Activated CD8-positive, alpha-beta T cell treated with anti-CD3 and anti-CD28 coated beads for 36 hours (primary cell): ENCODE measurements at regions of chr2 and their contacts with region 1.

Region 1: DNA sequence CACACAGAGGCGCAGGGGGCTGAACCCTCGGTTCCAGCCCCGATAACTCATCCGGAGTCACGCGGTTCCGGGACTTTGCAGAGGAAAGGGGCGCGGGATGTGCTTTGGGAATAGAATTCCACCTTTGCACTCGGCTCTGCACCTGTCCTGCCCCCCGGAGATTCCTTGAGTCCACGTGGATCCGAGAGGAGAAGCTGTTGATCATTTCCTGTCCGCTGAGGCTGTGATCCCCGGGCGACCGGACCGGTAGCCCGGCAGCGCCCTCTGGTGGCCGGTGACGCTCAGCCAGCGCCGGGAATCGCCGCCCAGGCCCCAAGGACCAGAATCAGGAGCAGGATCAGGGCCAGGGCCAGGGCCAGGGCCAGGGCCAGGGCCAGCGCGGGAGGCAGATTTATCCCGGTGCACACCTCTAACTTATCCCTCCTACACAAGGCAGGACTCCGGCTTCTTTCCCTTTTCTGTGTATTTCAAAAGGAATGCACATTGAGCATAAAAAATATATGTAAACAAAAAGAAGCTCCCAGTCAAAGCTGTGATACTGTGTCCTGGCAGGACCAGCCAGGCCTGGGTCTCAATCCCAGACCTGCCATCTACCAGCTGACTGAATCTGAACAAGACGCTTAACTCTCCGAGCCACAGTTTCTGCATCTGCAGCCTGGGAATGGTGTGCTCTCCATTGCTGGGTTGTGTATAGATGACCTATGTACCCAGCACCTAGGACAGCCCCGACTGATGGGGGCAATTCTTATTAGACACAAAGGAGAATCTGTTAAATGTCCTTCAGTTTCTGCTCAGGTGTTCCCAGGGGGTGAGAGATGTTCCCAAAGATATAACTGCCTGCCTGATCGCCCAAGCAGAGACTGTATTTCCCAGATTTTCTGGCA is 8.5 kb upstream of the SPATA3 start:
- DNase-seq: peak; percentile 81
- ATAC-seq: peak; percentile 35
- H3K4me3 Mint-ChIP-seq: peak overlapping the region; percentile 67
- H3K27ac Mint-ChIP-seq: peak overlapping the region; percentile 71
- H3K4me1 Mint-ChIP-seq: peaks cover 40% of the 10 kb centered on the region
- H3K27me3 Mint-ChIP-seq: peaks cover 18% of the 10 kb centered on the region
- CTCF ChIP-seq: peak; percentile 97

Region 2: DNA sequence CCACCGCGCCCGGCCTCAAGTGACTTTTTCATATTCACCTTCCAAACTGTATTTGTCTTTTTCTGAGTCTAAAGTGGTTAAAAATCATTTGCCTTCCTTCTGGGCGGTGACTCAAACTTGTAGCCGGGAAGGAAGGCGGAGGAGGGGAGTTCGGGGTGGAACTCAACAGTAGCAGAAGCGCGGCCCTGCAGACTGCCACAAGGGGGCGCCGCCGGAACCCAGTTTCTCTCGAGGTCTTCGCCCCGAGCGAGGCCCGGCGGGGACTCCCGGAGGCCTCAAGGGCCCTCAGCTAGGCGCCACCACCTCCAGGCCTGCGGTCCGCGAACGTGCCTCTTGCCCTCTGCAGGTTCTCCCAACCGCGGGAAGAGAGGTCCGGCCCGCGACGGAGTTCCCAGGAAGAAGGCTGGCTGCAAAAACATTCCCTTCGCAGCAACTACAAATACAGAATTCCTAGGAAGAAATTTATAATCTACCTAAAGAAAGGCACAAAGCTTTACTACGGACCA is 139.4 kb before region 1 on chr2:
- CTCF ChIA-PET with region 1: interaction called, 28 read pairs
- POLR2A ChIA-PET with region 1: no interaction called
- intact Hi-C with region 1: loop called (anchors 5 kb)
- DNase-seq: peak; percentile 97
- ATAC-seq: peak; percentile 97
- H3K4me3 Mint-ChIP-seq: no peak overlapping the region
- H3K27ac Mint-ChIP-seq: no peak overlapping the region
- H3K4me1 Mint-ChIP-seq: peaks cover 10% of the 10 kb centered on the region
- H3K27me3 Mint-ChIP-seq: peaks cover 21% of the 10 kb centered on the region
- CTCF ChIP-seq: peak; percentile 96

Region 3: GRCh38 chr2:230893841-230894781 is 93.3 kb before region 1 on chr2:
- CTCF ChIA-PET with region 1: interaction called, 437 read pairs
- POLR2A ChIA-PET with region 1: interaction called, 5 read pairs
- intact Hi-C with region 1: no loop called
- DNase-seq: no peak
- ATAC-seq: peak; percentile 63
- H3K4me3 Mint-ChIP-seq: no peak overlapping the region
- H3K27ac Mint-ChIP-seq: no peak overlapping the region
- H3K4me1 Mint-ChIP-seq: peaks cover 24% of the 10 kb centered on the region
- H3K27me3 Mint-ChIP-seq: no peaks in the 10 kb centered on the region
- CTCF ChIP-seq: no peak

Region 4: GRCh38 chr2:230947908-230948365 is 39.4 kb before region 1 on chr2:
- CTCF ChIA-PET with region 1: interaction called, 41 read pairs
- POLR2A ChIA-PET with region 1: interaction called, 19 read pairs
- intact Hi-C with region 1: loop called (anchors 2 kb)
- DNase-seq: peak; percentile 62
- ATAC-seq: peak; percentile 19
- H3K4me3 Mint-ChIP-seq: peak overlapping the region; percentile 49
- H3K27ac Mint-ChIP-seq: peak overlapping the region; percentile 60
- H3K4me1 Mint-ChIP-seq: peaks cover 48% of the 10 kb centered on the region
- H3K27me3 Mint-ChIP-seq: no peaks in the 10 kb centered on the region
- CTCF ChIP-seq: no peak

Region 5: DNA sequence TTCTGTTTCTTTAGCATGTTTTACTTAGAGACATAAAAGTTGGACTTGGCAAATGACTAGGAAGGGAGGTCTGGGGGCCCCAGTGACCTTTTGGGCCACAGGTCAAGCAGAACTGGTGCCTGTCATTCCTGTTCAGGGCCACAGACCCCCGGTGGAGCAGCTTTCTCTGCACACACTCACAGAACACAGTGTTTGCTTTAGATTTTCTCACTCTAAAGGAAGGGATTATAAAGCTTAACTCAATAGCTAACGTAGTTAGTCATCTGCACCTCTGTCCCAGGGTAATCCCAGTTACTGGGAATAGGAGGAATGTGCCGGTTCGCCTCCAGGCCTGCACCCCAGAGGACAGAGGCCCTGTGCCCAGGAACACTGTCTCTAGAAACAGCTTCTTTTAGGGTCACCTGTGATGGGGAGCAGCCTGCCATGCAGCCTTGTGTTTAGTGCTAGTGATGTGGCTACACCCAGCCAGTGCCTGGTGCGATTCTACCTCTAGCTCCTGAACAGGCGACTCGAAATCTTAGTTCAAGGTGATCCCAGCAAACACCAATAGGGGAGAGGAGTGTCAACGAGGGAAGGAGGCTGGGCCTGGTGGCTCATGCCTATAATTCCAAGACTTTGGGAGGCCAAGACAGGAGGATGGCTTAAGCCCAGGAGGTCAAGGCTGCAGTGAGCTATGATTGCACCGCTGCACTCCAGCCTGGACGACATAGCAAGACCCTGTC is 20.1 kb after region 1 on chr2:
- CTCF ChIA-PET with region 1: interaction called, 15 read pairs
- POLR2A ChIA-PET with region 1: no interaction called
- intact Hi-C with region 1: no loop called
- DNase-seq: no peak
- ATAC-seq: no peak
- H3K4me3 Mint-ChIP-seq: no peak overlapping the region
- H3K27ac Mint-ChIP-seq: no peak overlapping the region
- H3K4me1 Mint-ChIP-seq: no peaks in the 10 kb centered on the region
- H3K27me3 Mint-ChIP-seq: peaks cover 5% of the 10 kb centered on the region
- CTCF ChIP-seq: no peak

Region 6: GRCh38 chr2:231212329-231212845 is 225.0 kb after region 1 on chr2:
- CTCF ChIA-PET with region 1: no interaction called
- POLR2A ChIA-PET with region 1: no interaction called
- intact Hi-C with region 1: no loop called
- DNase-seq: no peak
- ATAC-seq: no peak
- H3K4me3 Mint-ChIP-seq: no peak overlapping the region
- H3K27ac Mint-ChIP-seq: no peak overlapping the region
- H3K4me1 Mint-ChIP-seq: no peaks in the 10 kb centered on the region
- H3K27me3 Mint-ChIP-seq: no peaks in the 10 kb centered on the region
- CTCF ChIP-seq: no peak